ENCODE measurements at regions of chr17 and their contacts with region 1.

Region 1: DNA sequence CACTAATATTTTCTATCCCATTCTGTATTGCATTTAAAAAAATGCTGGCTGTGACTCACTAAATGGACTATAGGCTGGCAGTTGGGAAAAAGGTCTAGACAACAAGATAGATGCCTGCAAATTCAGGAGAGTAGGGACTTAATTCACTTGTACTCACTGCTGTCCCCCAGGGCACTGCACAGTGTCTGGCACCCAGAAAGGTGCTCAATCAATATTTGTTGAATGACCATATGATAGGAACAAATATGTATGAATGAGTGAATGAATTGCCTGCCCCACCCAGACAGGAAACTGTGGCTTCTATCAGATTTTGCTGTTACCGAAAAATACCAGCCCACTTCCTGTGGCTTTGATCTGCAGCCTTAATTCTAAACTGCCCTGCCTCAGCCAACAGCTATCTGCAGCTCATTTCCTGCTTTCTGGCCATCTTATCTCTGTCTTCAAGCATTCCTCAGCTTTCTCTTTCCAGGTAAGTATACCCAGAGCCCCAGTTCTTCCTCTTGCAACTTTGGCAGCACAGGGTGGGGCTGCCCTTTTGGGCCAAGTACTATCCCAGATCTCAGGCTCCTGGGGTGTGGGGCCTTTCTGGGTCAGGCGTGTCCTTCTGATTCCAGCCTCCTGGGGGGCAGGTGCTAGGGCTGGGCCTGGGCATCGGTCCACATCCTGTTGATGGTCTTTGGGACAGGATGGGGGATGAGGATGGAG is 15.3 kb upstream of the TNS4 start:
- DNase-seq: peak; percentile 93
- ATAC-seq: peak; percentile 63
- H3K4me3 ChIP-seq: peak overlapping the region; percentile 4; the same call in 1 of the 2 replicates
- H3K27ac ChIP-seq: peak overlapping the region; percentile 100
- H3K4me1 ChIP-seq: peaks cover 82% of the 10 kb centered on the region
- H3K27me3 ChIP-seq: no peaks in the 10 kb centered on the region
- CTCF ChIP-seq: no peak

Region 2: GRCh38 chr17:40480501-40481003 is 36.2 kb before region 1 on chr17:
- CTCF ChIA-PET with region 1: no interaction called
- POLR2A ChIA-PET with region 1: interaction called, 12 read pairs
- intact Hi-C with region 1: no loop called
- DNase-seq: peak; percentile 34
- ATAC-seq: peak; percentile 44
- H3K4me3 ChIP-seq: no peak overlapping the region
- H3K27ac ChIP-seq: peak overlapping the region; percentile 99
- H3K4me1 ChIP-seq: peaks cover 28% of the 10 kb centered on the region
- H3K27me3 ChIP-seq: no peaks in the 10 kb centered on the region
- CTCF ChIP-seq: no peak

Region 3: GRCh38 chr17:40499551-40500174 is 17.1 kb before region 1 on chr17:
- CTCF ChIA-PET with region 1: no interaction called
- POLR2A ChIA-PET with region 1: interaction called, 3 read pairs
- intact Hi-C with region 1: loop called (anchors 2 kb)
- DNase-seq: peak; percentile 70
- ATAC-seq: peak; percentile 67
- H3K4me3 ChIP-seq: peak overlapping the region; percentile 81
- H3K27ac ChIP-seq: peak overlapping the region; percentile 66
- H3K4me1 ChIP-seq: peaks cover 44% of the 10 kb centered on the region
- H3K27me3 ChIP-seq: no peaks in the 10 kb centered on the region
- CTCF ChIP-seq: no peak

Measured in PC-3 (cell line).